AG04450 (cell line): ENCODE measurements at regions of chr1 and their contacts with region 1.

Region 1: DNA sequence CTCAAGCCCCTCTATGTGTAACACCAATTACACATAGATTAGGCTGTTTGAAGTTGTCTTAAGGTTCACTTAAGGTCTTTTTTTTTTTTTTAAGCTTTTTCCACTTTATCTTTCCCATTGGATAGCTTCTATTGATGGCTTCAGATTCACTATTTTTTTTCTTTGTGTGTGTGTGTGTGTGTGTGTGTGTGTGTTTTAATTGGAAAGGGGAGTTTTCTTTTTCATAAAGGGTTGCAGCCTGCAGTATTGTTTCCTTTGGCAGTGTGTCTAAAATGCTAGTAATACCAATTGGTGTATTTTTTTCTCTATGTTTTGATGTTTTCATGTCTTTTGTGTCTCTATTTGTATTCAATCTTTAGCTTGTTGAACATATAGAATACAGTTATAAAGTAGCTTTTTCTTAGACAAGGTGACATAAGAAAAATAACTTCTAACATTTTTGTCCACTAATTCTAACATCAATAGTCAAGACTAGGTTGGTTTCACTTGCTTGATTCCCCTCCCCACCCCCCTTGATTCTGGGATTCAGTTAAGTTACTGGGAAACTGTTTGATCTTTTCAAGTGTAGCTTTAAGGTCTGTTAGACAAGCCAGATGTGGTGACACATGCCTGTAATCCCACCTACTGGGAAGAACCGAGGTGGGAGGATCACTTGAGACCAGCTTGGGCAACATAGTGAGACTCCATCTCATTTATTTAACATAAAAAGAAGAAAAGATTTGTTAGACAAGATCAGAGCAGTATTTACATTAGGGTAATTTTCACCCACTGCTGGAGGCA is 21.4 kb downstream of the PRRC2C start:
- DNase-seq: no peak
- H3K4me3 ChIP-seq: no peak overlapping the region
- H3K27ac ChIP-seq: no peak overlapping the region
- H3K27me3 ChIP-seq: no peaks in the 10 kb centered on the region
- CTCF ChIP-seq: no peak

Region 2: DNA sequence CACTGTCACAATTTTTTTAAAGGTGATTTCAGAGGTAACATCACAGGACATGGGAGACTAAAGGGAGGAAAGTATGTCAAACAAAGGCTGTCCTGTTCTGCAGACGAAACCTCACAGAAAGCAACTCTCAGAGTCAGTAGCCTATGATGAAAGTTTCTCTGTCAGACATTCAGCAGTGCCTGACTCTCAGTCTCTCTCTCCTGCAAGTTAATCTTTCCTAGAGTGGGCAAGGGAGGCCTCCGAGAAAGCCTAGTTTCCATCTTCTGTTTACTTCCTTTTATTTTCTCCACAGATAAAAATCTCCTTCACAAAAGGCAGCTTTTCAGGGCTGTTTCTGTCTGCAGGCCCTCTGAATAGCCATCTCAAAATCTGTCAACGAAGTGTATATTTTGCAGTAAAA is 346.5 kb before region 1 on chr1:
- CTCF ChIA-PET with region 1: no interaction called
- POLR2A ChIA-PET with region 1: no interaction called
- DNase-seq: no peak
- H3K4me3 ChIP-seq: no peak overlapping the region
- H3K27ac ChIP-seq: no peak overlapping the region
- H3K27me3 ChIP-seq: no peaks in the 10 kb centered on the region
- CTCF ChIP-seq: no peak

Region 3: DNA sequence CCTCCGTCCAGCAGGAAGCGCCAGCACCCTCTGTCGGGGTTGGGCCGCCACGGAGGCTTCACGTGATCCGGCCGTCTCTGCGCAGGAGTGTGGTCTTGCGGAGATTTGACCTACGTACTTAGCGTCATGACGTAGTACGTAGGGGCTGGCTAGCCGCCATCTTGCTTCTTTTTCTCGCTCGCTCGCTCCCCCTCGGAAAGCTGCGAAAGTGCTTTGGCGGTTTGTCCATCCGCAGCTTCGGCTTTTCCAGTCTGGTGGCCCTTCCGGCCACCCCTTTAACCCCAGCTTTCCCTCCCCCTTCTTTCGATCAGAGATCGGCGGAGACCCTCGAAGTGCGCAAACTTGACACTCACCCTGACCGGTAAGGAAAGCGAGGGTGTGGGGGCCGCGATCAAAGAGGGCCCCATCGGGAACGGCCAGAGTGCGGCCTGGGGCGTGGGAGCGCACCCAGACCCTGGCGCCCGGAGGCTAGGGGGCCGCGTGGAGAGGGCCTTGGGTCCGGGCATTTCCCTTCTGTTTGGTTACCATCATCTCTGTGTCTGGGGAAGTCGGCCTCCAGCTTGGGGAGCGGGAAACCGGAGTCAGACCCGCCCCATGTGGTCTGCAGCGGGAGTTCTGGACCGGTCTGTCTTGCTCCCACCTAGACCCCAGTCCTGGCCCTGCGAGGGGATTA is 21.2 kb before region 1 on chr1 and contains the start of gene PRRC2C:
- CTCF ChIA-PET with region 1: interaction called, 12 read pairs
- POLR2A ChIA-PET with region 1: no interaction called
- DNase-seq: peak; percentile 97
- H3K4me3 ChIP-seq: peak within 1 kb of the TSS; percentile 96
- H3K27ac ChIP-seq: peak within 1 kb of the TSS; percentile 100
- H3K27me3 ChIP-seq: no peaks in the 10 kb centered on the region
- CTCF ChIP-seq: peak; percentile 78
- polyA plus RNA-seq, gene PRRC2C: 66.4 and 80.0 TPM in 2 replicates

Region 4: DNA sequence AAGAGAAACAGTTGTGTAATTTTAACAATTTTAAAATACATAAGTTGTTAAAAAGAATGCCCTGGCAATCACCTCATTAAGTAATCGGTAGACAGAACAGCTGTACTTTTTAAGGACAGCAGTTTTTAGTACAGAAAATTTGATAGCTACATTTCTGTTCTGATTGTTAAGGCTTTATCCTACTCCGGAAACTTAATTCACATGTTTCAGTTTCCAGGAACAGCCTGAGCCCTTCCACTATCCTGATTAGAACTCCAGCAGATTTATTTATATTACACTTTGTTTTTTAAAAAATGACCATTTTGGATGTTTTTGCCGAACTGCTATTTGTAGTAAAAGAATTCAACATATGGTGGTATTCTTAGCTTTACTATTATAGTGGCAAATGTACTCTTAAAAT is 12.6 kb before region 1 on chr1:
- CTCF ChIA-PET with region 1: interaction called, 11 read pairs
- POLR2A ChIA-PET with region 1: interaction called, 3 read pairs
- DNase-seq: no peak
- H3K4me3 ChIP-seq: no peak overlapping the region
- H3K27ac ChIP-seq: no peak overlapping the region
- H3K27me3 ChIP-seq: no peaks in the 10 kb centered on the region
- CTCF ChIP-seq: no peak

Region 5: GRCh38 chr1:171521567-171521966 is 14.9 kb after region 1 on chr1:
- CTCF ChIA-PET with region 1: no interaction called
- POLR2A ChIA-PET with region 1: no interaction called
- DNase-seq: no peak
- H3K4me3 ChIP-seq: no peak overlapping the region
- H3K27ac ChIP-seq: no peak overlapping the region
- H3K27me3 ChIP-seq: no peaks in the 10 kb centered on the region
- CTCF ChIP-seq: no peak